ENCODE measurements at regions of chr6 and their contacts with region 1.

Region 1: DNA sequence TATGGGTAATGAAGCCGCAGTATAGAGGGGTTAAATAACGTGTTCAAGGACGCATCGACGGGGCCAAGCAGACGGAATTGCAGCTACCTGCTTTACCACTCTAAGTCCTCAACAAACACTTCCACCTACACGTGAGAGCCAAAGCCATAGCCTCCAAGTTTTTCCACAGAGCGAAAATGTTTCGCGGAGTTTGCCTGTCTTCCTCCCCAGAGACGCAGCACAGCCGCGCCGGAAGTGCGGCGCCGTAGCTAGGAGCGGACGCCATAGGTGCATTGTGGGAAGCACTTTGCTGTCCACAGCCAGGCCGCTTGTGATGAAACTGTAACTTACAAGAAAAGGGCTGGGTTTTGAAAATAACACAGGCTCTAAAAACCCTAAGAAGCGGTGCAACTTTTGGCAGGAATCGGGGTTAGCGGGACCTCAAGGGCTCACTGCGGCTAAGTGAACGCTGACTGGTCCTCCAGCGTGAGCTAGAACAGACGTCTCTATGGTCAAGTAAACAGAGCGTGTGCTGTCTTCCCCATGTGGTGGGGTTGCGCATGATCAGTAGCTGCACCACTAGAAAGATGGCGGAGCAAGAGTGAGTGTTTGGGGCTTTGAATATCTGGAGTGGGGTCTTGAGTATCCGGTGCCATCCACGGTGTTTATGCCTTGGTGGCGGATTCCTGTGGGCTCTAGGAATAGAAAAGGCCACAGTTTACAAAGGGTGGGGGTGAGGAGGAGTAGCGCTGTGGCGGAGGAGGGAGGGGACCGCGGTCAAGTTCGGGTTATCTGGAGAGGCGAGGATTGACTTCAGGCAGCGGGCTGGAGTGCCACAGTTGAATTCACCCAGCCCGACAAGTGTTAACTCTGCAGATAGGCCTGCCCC is at the start of gene RPL7L1:
- DNase-seq: peak; percentile 87
- ATAC-seq: peak; percentile 96
- H3K4me3 ChIP-seq: peak within 1 kb of the TSS; percentile 69
- H3K27ac ChIP-seq: peak within 1 kb of the TSS; percentile 99
- H3K4me1 ChIP-seq: no peaks in the 10 kb centered on the region
- H3K27me3 ChIP-seq: no peaks in the 10 kb centered on the region
- CTCF ChIP-seq: no peak
- POLR2A ChIP-seq: peak; percentile 95
- RAD21 ChIP-seq: no peak
- total RNA-seq, gene RPL7L1: 112 and 125 TPM in 2 replicates

Region 2: DNA sequence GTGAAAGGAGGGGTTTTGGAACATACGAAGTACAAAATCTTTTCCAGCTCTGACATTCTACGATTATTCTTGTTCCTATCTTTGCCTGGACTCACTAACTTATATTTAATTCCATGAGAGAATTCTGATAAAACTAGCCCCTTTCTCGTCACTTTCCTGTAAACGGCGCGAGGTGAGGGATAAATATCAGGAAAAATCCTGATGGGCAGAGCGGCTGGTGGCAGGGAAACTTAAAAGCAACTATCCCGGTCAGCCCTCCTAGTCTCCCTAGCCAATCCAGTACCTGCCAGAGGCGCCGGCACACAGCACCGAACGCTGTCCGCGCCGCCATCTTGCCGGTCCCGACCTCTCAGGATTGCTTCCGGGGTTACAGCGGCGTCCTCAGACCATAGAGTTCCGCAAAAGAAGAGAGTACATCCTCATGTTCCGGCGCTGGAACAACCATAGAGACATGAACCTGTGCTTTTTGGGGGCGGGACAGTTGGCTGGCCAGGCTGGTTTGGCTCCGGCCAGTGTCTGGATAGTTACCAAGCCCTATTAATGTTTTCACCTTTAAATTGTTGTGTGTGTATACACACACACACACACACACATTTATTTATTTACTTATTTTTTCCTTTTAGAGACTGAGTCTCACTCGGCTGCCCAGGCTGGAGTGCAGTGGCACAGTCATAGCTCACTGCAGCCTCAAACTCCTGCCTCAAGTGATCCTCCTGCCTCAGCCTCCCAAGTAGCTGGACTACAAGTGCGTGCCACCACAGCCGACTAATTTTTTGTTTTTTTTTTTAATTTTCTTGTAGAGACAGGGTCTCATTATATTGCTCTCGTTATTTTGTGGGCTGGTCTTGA is 661.9 kb before region 1 on chr6 and contains the start of gene MRPS10:
- CTCF ChIA-PET with region 1: no interaction called
- POLR2A ChIA-PET with region 1: no interaction called
- dilution Hi-C with region 1: no loop called
- in situ Hi-C with region 1: no loop called
- intact Hi-C with region 1: no loop called
- DNase-seq: peak; percentile 94
- ATAC-seq: peak; percentile 98
- H3K4me3 ChIP-seq: peak within 1 kb of the TSS; percentile 82
- H3K27ac ChIP-seq: peak within 1 kb of the TSS; percentile 83
- H3K4me1 ChIP-seq: peaks cover 2% of the 10 kb centered on the region; the same call in 1 of the 2 replicates
- H3K27me3 ChIP-seq: no peaks in the 10 kb centered on the region
- CTCF ChIP-seq: no peak
- POLR2A ChIP-seq: peak; percentile 85
- RAD21 ChIP-seq: no peak
- total RNA-seq, gene MRPS10: 47.0 and 71.1 TPM in 2 replicates

Region 3: GRCh38 chr6:42661540-42662153 is 218.0 kb before region 1 on chr6:
- CTCF ChIA-PET with region 1: interaction called, 4 read pairs
- POLR2A ChIA-PET with region 1: no interaction called
- dilution Hi-C with region 1: loop called (anchors 25 kb)
- in situ Hi-C with region 1: loop called (anchors 5 kb)
- intact Hi-C with region 1: loop called (anchors 1 kb)
- DNase-seq: peak; percentile 62
- ATAC-seq: peak; percentile 94
- H3K4me3 ChIP-seq: no peak overlapping the region
- H3K27ac ChIP-seq: no peak overlapping the region
- H3K4me1 ChIP-seq: no peaks in the 10 kb centered on the region
- H3K27me3 ChIP-seq: no peaks in the 10 kb centered on the region
- CTCF ChIP-seq: peak; percentile 87
- POLR2A ChIP-seq: 0 out of 2 replicates have a peak, but pooled peaks have one; percentile 29
- RAD21 ChIP-seq: peak; percentile 88

Region 4: DNA sequence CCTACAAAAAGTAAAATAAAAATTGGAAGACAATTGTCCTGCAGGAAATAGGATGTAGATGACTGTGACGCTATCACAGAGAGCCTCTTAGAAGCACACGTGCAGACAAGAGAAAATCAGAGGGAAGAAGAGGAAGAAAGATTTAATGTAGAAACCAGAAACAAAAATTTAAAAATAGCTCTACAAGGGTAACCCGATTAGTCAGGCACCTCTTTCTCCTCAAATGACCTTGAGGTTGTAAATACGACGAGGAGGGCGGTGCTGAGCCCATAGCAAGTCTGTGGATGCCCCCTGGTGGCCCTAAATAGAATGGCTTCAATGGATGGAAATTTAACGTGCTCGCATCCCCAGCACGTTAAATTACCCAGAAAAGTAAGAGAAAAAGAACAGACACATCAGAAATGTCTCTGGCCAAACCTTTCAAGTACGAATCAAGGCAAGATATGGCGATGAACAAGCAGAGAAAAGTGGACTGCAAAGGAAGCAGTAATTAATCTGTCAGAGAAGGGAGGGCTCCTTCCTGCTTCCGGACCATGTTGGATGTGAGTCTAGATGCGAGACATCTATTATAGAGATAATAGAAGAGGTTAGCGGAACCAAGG is 153.0 kb before region 1 on chr6:
- CTCF ChIA-PET with region 1: interaction called, 6 read pairs
- POLR2A ChIA-PET with region 1: interaction called, 7 read pairs
- dilution Hi-C with region 1: no loop called
- in situ Hi-C with region 1: no loop called
- intact Hi-C with region 1: loop called (anchors 1 kb)
- DNase-seq: peak; percentile 91
- ATAC-seq: peak; percentile 94
- H3K4me3 ChIP-seq: peak overlapping the region; percentile 43
- H3K27ac ChIP-seq: peak overlapping the region; percentile 92
- H3K4me1 ChIP-seq: peaks cover 9% of the 10 kb centered on the region
- H3K27me3 ChIP-seq: no peaks in the 10 kb centered on the region
- CTCF ChIP-seq: peak; percentile 96
- POLR2A ChIP-seq: no peak
- RAD21 ChIP-seq: peak; percentile 94

Region 5: DNA sequence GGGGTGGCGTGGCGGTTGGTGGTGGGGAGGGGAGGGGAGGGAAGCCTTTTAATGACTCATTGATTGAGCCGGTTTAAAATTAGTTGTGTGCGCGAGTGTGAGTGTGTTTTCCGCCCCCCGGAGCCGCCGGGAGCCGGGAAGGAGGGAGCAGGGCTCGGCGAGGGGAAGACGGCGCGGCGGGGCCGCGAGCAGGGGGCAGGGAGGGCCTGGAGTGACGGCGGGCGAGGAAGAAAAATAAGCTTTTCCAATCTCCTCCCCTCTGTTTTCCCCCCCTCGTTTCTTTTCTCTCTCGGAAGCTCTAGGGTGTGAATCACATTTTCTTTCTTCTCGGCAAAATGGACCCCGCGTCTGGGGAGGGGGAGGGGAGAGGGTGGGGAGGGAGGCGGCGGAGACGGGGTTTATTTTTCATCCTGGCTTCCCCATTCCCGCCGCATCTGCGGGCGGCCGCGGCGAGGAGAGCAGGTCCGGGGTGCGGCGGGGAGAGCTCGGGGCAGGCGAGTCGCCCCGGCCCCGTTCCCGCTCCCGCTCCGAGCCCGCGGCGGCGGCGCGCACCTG is 96.9 kb before region 1 on chr6:
- CTCF ChIA-PET with region 1: interaction called, 7 read pairs
- POLR2A ChIA-PET with region 1: interaction called, 10 read pairs
- dilution Hi-C with region 1: no loop called
- in situ Hi-C with region 1: no loop called
- intact Hi-C with region 1: loop called (anchors 1 kb)
- DNase-seq: peak; percentile 90
- ATAC-seq: peak; percentile 84
- H3K4me3 ChIP-seq: peak overlapping the region; percentile 96
- H3K27ac ChIP-seq: peak overlapping the region; percentile 98
- H3K4me1 ChIP-seq: peaks cover 7% of the 10 kb centered on the region
- H3K27me3 ChIP-seq: no peaks in the 10 kb centered on the region
- CTCF ChIP-seq: no peak
- POLR2A ChIP-seq: peak; percentile 79; the same call in 1 of the 2 replicates
- RAD21 ChIP-seq: 0 out of 2 replicates have a peak, but pooled peaks have one; percentile 15

Region 6: DNA sequence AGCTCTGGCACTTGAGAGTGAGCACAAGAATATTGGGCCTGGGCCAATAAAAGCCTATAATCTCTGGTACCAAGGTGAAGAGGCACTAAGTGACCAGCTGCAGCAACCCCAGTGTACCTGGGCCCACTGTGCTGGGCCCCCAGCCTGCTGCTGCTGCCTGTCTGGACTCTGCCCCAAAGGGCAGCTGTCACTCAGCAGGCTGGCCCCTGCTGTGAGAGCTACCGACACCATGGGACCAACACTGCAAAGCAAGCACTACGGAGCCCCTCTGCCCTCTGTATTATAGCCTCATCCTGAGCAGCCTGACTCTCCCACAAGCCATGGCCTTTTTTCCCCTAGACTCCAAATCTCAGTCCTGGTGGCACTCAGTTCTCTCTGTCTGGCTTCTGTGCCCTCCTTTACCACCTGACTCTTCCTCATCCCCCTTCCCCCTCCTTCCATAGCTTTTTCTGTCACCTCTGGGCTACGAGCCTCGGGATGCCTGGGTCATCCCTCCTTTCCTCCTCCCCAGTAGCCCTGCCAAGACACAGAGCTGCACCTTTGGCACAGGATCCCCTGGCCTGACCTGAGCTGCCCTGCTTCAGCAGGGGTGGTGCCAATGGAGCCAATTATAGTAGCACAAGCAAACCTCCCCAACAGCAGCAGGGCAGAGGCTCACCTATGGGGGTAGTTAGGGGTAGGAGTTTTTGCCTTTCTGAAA is 156.0 kb after region 1 on chr6:
- CTCF ChIA-PET with region 1: no interaction called
- POLR2A ChIA-PET with region 1: no interaction called
- dilution Hi-C with region 1: no loop called
- in situ Hi-C with region 1: no loop called
- intact Hi-C with region 1: no loop called
- DNase-seq: no peak
- ATAC-seq: no peak
- H3K4me3 ChIP-seq: no peak overlapping the region
- H3K27ac ChIP-seq: no peak overlapping the region
- H3K4me1 ChIP-seq: no peaks in the 10 kb centered on the region
- H3K27me3 ChIP-seq: no peaks in the 10 kb centered on the region
- CTCF ChIP-seq: no peak
- POLR2A ChIP-seq: no peak
- RAD21 ChIP-seq: no peak